ENCODE measurements at regions of chr13 and their contacts with region 1.

Region 1: DNA sequence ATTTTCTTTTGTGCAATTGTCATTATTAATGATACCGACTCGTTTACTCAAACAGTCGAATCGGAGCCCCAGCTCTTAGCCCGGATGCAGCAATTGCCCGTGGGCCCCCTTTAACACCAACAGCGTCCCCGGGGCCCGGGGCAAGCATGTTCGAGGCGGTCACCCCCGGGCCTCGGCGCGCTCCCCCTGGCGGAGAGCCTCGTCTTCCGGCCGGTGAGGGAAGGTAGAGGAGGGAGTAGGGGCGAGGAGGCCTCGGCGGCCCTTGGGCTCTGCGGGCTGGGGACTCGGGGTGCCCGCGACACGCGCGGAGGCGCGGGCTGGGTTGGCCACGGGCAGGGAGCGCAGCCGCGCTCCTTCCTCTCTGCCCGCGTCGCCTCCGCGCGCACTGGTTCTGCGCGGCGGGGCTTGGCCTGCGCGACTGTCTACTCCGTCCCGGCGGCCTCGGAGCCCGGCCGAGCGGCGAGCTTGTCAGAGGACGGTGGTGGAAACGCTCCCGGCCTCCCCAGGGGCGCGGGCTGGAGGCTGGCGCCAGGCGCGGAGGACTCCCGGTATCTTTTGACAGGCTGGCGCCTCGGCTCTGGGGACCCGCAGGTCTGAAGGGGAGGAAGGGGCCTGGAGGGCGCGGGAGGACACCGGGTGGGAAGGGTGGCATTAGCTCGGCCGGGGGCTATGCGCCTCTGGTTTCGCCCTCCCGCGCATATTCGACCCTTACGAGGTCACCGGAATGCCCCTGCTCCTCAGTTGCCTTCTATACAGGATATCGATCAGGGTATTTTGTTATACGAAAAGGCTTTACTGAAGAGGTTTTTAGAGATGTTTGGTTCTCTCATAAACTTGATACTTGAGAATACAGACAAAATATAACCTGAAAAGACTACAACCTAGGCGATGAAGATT is 1.5 kb downstream of the BIVM start:
- DNase-seq: peak; percentile 85 to 93
- H3K4me3 ChIP-seq: peak overlapping the region; percentile 84
- H3K4me3 Mint-ChIP-seq: peak overlapping the region; percentile 93
- H3K27ac Mint-ChIP-seq: peak overlapping the region; percentile 81
- H3K4me1 ChIP-seq: 0 out of 2 replicates have a peak, but pooled peaks cover 4% of the 10 kb centered on the region
- H3K4me1 Mint-ChIP-seq: no peaks in the 10 kb centered on the region
- H3K27me3 ChIP-seq: no peaks in the 10 kb centered on the region
- H3K27me3 Mint-ChIP-seq: no peaks in the 10 kb centered on the region
- CTCF ChIP-seq: peak; percentile 91

Region 2: DNA sequence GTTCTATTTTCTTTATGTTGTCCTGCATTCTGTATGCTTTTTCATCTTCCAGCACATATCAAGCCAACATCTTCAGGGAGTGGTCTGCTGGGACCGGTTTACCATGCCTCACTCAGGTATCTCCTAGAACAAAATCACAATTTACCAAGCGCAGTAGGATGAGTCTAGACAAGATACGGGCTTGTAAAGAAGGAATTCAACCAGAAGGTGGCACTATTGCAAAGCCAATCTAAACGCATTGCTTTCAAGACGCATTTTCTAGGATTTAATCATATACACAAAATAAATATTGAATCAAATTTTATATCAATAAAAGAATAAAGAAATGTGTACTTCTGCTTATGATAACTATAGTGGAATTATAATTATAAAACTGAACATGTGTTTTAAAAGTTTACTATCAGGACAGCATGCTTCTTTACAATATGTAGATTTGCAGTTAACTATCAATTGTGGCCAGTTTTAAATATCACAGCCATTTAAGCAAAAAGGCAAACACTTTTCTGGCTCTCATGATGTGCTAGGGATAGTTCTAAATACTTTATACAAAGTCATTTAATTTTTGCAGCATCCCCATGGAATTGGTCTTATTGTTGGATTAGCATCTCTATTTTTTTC is 219.7 kb before region 1 on chr13:
- CTCF ChIA-PET with region 1: interaction called, 5 read pairs
- POLR2A ChIA-PET with region 1: no interaction called
- intact Hi-C with region 1: loop called (anchors 1 kb)
- DNase-seq: peak in 1 of 2 experiments; percentile 54
- H3K4me3 ChIP-seq: no peak overlapping the region
- H3K4me3 Mint-ChIP-seq: no peak overlapping the region
- H3K27ac Mint-ChIP-seq: no peak overlapping the region
- H3K4me1 ChIP-seq: no peaks in the 10 kb centered on the region
- H3K4me1 Mint-ChIP-seq: no peaks in the 10 kb centered on the region
- H3K27me3 ChIP-seq: no peaks in the 10 kb centered on the region
- H3K27me3 Mint-ChIP-seq: peaks cover 6% of the 10 kb centered on the region
- CTCF ChIP-seq: peak; percentile 66 to 75

Region 3: DNA sequence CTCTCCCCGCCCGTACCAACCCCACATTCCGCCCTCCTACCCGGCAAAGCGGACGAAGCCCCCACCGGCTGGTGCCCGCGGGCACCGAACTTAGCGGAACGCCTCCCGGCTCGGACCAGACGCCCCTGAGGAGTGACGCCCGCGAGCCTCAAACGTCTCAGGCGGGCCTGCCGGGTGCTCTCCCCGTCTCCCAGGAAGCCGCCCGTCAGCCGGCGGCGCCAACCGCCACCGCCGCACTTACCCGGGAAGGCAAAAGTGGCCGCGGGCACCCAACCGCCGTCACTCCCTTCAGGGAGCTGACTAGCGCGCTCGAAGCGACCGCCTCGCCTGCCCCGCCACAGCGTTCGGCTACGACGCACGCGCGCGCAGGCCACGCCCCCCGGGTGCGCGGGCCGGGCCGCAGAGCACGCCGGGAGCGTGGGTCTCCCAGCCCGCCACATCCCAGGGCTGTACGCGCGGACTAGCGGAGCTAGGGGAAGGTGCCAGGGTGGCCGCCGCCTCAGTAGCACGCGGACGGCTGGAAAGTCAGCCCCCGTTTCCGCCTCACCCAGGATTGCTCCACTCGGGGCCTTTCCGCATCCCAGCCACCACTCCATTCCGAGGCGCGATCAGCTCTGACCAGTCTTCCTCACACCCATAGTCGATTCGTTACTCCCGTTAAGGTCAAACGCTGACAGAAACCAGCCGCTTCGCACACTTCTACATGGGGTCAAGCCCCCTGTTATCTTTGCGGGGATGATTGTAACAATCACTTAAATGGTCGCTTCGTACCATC is 26.8 kb before region 1 on chr13 and contains the start of gene TEX30:
- CTCF ChIA-PET with region 1: interaction called, 6 read pairs
- POLR2A ChIA-PET with region 1: interaction called, 7 read pairs
- intact Hi-C with region 1: loop called (anchors 1 kb)
- DNase-seq: peak; percentile 87 to 94
- H3K4me3 ChIP-seq: peak within 1 kb of the TSS; percentile 96
- H3K4me3 Mint-ChIP-seq: peak within 1 kb of the TSS; percentile 92
- H3K27ac Mint-ChIP-seq: peak within 1 kb of the TSS; percentile 94
- H3K4me1 ChIP-seq: peaks cover 24% of the 10 kb centered on the region
- H3K4me1 Mint-ChIP-seq: peaks cover 31% of the 10 kb centered on the region
- H3K27me3 ChIP-seq: no peaks in the 10 kb centered on the region
- H3K27me3 Mint-ChIP-seq: no peaks in the 10 kb centered on the region
- CTCF ChIP-seq: no peak
- total RNA-seq, gene TEX30: 27.5 and 30.4 TPM in 2 replicates

Region 4: GRCh38 chr13:102830646-102831045 is 30.3 kb after region 1 on chr13:
- CTCF ChIA-PET with region 1: no interaction called
- POLR2A ChIA-PET with region 1: no interaction called
- intact Hi-C with region 1: loop called (anchors 2 kb)
- DNase-seq: peak; percentile 31 to 54
- H3K4me3 ChIP-seq: no peak overlapping the region
- H3K4me3 Mint-ChIP-seq: no peak overlapping the region
- H3K27ac Mint-ChIP-seq: no peak overlapping the region
- H3K4me1 ChIP-seq: no peaks in the 10 kb centered on the region
- H3K4me1 Mint-ChIP-seq: no peaks in the 10 kb centered on the region
- H3K27me3 ChIP-seq: no peaks in the 10 kb centered on the region
- H3K27me3 Mint-ChIP-seq: no peaks in the 10 kb centered on the region
- CTCF ChIP-seq: no peak

Measured in Caco-2 (cell line).